ENCODE measurements at regions of chr10 and their contacts with region 1.

Region 1: GRCh38 chr10:100338434-100339036 is 8.5 kb upstream of the SCD start:
- DNase-seq: peak; percentile 85
- H3K4me3 Mint-ChIP-seq: no peak overlapping the region
- H3K27ac Mint-ChIP-seq: no peak overlapping the region
- H3K4me1 Mint-ChIP-seq: peaks cover 13% of the 10 kb centered on the region
- H3K27me3 Mint-ChIP-seq: peaks cover 12% of the 10 kb centered on the region

Region 2: GRCh38 chr10:100315615-100316014 is 22.9 kb before region 1 on chr10:
- CTCF ChIA-PET with region 1: no interaction called
- POLR2A ChIA-PET with region 1: no interaction called
- DNase-seq: no peak
- H3K4me3 Mint-ChIP-seq: no peak overlapping the region
- H3K27ac Mint-ChIP-seq: no peak overlapping the region
- H3K4me1 Mint-ChIP-seq: no peaks in the 10 kb centered on the region
- H3K27me3 Mint-ChIP-seq: peaks cover 60% of the 10 kb centered on the region

Region 3: DNA sequence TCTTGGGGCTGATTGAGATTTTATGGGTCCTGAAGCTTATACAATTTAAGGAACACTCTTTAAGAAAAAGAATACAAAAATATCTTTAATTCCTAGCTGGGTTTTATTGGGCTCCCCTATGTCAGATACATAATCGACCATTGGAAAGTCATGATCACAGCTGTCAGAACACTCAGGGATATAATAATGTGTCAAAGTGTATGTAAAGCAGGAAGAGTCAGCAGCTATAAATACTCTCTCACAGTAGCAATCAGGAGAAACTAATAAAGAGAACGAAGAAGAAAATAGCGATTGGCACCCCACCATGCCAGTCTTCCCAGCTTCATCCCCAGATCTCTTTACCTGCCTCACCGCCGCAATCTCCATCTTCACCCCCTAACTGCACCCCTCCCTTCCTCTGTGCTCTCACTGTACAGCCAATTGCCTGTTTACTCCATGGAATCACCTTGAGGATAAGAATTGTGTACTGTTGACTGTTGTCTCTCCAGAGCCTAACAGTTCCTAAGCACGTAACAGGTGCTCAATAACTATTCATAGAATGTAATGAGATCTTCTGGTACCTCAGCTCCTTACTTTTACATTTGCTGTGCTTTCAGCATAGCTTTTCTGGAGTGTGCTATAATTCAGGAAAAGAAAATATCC is 100.3 kb after region 1 on chr10:
- CTCF ChIA-PET with region 1: interaction called, 220 read pairs
- POLR2A ChIA-PET with region 1: interaction called, 3 read pairs
- DNase-seq: no peak
- H3K4me3 Mint-ChIP-seq: no peak overlapping the region
- H3K27ac Mint-ChIP-seq: no peak overlapping the region
- H3K4me1 Mint-ChIP-seq: peaks cover 4% of the 10 kb centered on the region
- H3K27me3 Mint-ChIP-seq: peaks cover 2% of the 10 kb centered on the region

Measured in activated CD4-positive, alpha-beta memory T cell treated with anti-CD3 and anti-CD28 coated beads, Interleukin-2, amount 10 ng/mL, durations not matched to agents 7 days and 5 days (primary cell).